Activated CD4-positive, alpha-beta T cell treated with anti-CD3 and anti-CD28 coated beads for 36 hours (primary cell): ENCODE measurements at regions of chr3 and their contacts with region 1.

Region 1: DNA sequence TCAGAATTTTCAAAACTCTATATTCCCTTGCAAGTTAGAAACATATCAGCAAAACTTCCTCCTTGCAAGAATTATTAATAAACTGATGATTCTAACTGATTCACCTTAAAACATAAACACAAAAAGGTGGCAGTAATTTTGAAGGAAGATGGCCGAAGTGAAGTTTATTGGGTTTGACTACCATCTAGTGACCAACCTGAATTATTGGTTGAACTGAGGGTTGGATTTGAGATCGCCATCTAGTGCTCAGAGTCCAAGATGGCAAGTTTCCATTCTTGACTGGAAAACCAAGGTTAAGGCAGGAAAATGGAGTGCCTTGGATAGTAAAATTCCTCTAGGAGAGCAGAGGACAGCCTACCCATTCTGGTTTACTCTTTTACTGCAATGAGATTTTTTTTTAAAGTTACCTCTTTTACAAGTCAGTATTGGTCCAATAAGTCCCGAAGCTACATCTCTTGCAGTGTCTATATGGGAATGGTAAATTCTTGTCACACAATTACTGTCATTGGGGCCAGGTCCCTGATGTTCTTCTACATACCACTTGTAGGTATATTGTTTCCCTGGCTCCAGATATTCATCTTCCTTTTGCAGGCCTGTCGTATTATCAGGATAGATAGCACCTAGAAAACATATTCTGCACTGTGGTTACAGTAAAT is 51.6 kb upstream of the CP start:
- DNase-seq: peak; percentile 28
- ATAC-seq: peak; percentile 79
- H3K4me3 Mint-ChIP-seq: no peak overlapping the region
- H3K27ac Mint-ChIP-seq: no peak overlapping the region
- H3K4me1 Mint-ChIP-seq: peaks cover 7% of the 10 kb centered on the region
- H3K27me3 Mint-ChIP-seq: no peaks in the 10 kb centered on the region

Region 2: GRCh38 chr3:148861277-148861869 is 411.9 kb before region 1 on chr3:
- CTCF ChIA-PET with region 1: no interaction called
- POLR2A ChIA-PET with region 1: no interaction called
- intact Hi-C with region 1: loop called (anchors 1 kb)
- DNase-seq: no peak
- ATAC-seq: peak; percentile 60
- H3K4me3 Mint-ChIP-seq: no peak overlapping the region
- H3K27ac Mint-ChIP-seq: no peak overlapping the region
- H3K4me1 Mint-ChIP-seq: no peaks in the 10 kb centered on the region
- H3K27me3 Mint-ChIP-seq: peaks cover 10% of the 10 kb centered on the region

Region 3: DNA sequence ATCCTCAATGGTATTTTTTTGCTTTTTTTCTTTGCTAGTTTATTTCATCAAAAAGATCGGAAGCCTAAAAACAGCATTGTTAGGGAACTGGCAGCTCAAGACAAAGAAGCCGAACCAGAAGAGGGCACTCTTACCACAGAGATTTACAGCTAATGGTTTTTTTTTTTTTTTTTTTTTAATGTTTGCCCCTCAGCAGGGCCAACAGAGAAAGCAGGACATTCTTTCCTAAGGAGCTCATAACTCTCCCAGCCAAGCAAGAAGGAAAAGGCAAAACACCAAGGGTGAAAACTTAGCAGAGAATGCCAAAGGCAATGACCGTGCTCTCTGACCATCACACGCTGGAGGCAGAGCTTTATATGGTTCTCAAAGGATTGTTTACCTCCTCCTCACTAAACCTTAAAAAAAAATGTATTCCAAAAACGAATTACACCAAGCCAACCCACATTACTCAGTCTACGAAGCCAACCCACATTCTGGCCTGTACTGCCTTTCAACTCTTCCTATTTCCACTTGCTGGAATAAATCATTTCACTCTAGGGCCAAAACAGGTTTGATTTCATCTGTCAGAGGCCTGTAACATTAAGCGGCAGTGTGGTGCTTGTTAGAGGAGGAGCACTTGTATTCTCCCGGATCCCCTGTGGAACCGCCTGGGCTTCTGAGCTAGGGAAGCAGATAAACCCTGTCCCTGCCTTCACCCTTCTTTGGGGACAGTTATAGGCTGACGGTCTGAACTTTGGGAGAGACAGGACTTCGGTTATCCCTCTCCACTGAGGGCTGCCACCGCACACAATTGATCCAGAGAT is 317.5 kb before region 1 on chr3:
- CTCF ChIA-PET with region 1: interaction called, 18 read pairs
- POLR2A ChIA-PET with region 1: no interaction called
- intact Hi-C with region 1: loop called (anchors 1 kb)
- DNase-seq: peak; percentile 42
- ATAC-seq: peak; percentile 23
- H3K4me3 Mint-ChIP-seq: no peak overlapping the region
- H3K27ac Mint-ChIP-seq: no peak overlapping the region
- H3K4me1 Mint-ChIP-seq: peaks cover 2% of the 10 kb centered on the region
- H3K27me3 Mint-ChIP-seq: no peaks in the 10 kb centered on the region